ENCODE measurements at regions of chr20 and their contacts with region 1.

Region 1: GRCh38 chr20:34069341-34070078 is 42.5 kb downstream of the EIF2S2 start:
- DNase-seq: no peak
- H3K4me3 ChIP-seq: no peak overlapping the region
- H3K27me3 ChIP-seq: no peaks in the 10 kb centered on the region
- CTCF ChIP-seq: peak; percentile 84

Region 2: GRCh38 chr20:34083137-34083536 is 13.6 kb after region 1 on chr20:
- CTCF ChIA-PET with region 1: interaction called, 12 read pairs
- POLR2A ChIA-PET with region 1: no interaction called
- DNase-seq: no peak
- H3K4me3 ChIP-seq: no peak overlapping the region
- H3K27me3 ChIP-seq: no peaks in the 10 kb centered on the region
- CTCF ChIP-seq: peak; percentile 14; the same call in 1 of the 2 replicates

Region 3: GRCh38 chr20:34171640-34172039 is 102.1 kb after region 1 on chr20:
- CTCF ChIA-PET with region 1: no interaction called
- POLR2A ChIA-PET with region 1: no interaction called
- DNase-seq: no peak
- H3K4me3 ChIP-seq: no peak overlapping the region
- H3K27me3 ChIP-seq: peaks cover 3% of the 10 kb centered on the region; the same call in 1 of the 2 replicates
- CTCF ChIP-seq: no peak

Measured in BJ (cell line).